A673 (cell line): ENCODE measurements at regions of chr17 and their contacts with region 1.

Region 1: GRCh38 chr17:48678141-48678971 is 44.0 kb downstream of the PRAC1 start:
- DNase-seq: peak; percentile 83
- H3K4me3 ChIP-seq: peak overlapping the region; percentile 39
- H3K27ac ChIP-seq: no peak overlapping the region
- H3K4me1 ChIP-seq: peaks cover 17% of the 10 kb centered on the region
- H3K27me3 ChIP-seq: no peaks in the 10 kb centered on the region
- CTCF ChIP-seq: peak; percentile 99

Region 2: GRCh38 chr17:48756830-48757251 is 78.5 kb after region 1 on chr17:
- CTCF ChIA-PET with region 1: no interaction called
- POLR2A ChIA-PET with region 1: no interaction called
- intact Hi-C with region 1: loop called (anchors 10 kb)
- DNase-seq: no peak
- H3K4me3 ChIP-seq: no peak overlapping the region
- H3K27ac ChIP-seq: peak overlapping the region; percentile 12
- H3K4me1 ChIP-seq: peaks cover 9% of the 10 kb centered on the region
- H3K27me3 ChIP-seq: no peaks in the 10 kb centered on the region
- CTCF ChIP-seq: no peak

Region 3: GRCh38 chr17:48804925-48805411 is 126.6 kb after region 1 on chr17:
- CTCF ChIA-PET with region 1: interaction called, 11 read pairs
- POLR2A ChIA-PET with region 1: no interaction called
- intact Hi-C with region 1: loop called (anchors 5 kb)
- DNase-seq: peak; percentile 87
- H3K4me3 ChIP-seq: peak overlapping the region; percentile 24
- H3K27ac ChIP-seq: peak overlapping the region; percentile 89
- H3K4me1 ChIP-seq: peaks cover 50% of the 10 kb centered on the region
- H3K27me3 ChIP-seq: no peaks in the 10 kb centered on the region
- CTCF ChIP-seq: peak; percentile 96

Region 4: DNA sequence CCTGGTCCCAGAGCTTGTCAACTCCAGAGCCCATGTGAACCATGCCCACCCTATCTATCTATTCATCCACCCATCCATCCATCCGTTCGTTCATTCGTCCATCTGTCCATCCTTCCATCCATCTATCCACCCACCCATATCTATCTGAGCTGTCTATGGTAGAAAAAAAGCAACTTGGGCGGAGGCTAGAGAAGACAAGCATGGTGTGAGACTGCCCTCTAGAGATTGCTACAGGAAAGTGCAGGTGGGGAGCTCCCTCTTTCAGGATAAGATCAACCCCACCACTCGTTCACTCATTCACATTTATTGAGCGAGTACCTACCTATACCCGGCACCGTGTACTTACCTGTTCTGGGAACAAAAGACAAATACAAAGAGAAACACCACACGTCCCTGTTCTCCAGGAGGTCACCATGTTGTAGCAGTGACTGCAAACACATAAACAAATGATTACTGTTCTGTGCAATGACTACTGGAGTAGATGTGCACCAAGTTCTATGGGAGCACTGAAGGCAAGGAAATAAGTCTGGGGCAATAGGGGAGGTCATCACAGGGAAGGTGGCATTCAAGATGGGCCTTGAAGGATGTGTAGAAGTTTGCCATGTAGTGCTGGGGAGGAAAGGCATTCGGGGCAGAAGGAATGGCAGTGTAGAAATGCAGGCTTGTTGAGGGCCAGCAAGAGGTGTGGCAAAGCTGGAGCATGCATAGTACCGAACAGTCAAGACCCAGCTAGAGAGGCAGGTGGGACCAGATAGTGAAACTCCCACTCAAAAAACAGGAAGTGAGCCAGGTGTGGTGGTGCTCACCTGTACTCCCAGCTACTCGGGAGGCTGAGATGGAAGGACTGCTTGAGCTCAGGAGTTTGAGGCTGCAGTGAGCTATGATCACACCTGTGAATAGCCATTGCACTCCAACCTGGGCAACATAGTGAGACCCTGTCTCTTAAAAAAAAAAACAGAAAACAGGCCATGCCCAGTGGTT is 200.9 kb after region 1 on chr17:
- CTCF ChIA-PET with region 1: interaction called, 67 read pairs
- POLR2A ChIA-PET with region 1: no interaction called
- intact Hi-C with region 1: loop called (anchors 1 kb)
- DNase-seq: peak; percentile 82
- H3K4me3 ChIP-seq: no peak overlapping the region
- H3K27ac ChIP-seq: no peak overlapping the region
- H3K4me1 ChIP-seq: no peaks in the 10 kb centered on the region
- H3K27me3 ChIP-seq: no peaks in the 10 kb centered on the region
- CTCF ChIP-seq: peak; percentile 95

Region 5: DNA sequence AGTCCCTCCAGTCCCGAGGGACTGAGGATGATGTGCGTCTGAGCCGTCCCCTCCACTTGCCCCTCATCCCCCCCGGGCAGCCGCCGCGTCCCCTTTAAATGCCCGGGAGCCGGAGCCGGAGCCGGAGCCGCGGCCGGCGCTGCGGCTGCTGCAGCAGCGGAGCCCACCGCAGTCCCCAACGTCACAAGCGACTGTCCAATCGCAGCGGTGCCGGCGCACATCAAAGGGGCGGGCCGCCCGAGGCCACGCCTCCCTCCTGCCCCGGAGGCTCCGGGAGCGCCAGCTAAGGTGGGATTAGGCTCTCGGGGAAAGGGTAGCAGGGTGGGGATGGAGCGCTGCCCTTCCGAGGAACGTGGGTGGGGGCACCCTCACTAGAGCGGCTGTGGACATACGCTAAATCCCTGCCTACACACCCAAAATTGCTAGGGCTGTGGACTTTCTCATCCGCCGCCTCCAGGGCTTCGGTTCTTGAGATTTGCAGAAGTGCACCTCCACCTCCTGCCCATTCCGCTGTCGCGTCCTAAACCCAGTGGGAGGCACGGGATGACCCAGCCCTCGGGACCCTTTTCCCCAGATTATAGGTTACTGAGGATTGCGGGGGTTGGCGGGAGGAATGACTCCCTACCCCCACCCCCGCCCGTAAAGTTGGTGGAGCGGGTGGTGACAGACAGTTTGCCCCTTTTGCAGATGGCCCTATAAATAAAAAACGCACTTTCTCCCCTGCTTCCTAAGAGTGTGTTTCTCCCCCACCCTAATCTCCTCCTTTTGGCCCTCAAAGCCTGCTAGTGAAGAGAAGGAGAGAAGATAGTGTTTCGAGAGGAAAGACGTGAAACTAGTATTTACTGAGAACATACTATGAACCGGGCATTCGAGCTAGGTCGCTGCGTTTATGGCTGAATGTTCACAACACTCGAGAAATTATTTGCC is 552.5 kb after region 1 on chr17 and contains the start of gene PHOSPHO1:
- CTCF ChIA-PET with region 1: no interaction called
- POLR2A ChIA-PET with region 1: no interaction called
- intact Hi-C with region 1: loop called (anchors 10 kb)
- DNase-seq: peak; percentile 94
- H3K4me3 ChIP-seq: peak within 1 kb of the TSS; percentile 76
- H3K27ac ChIP-seq: peak within 1 kb of the TSS; percentile 86
- H3K4me1 ChIP-seq: peaks cover 22% of the 10 kb centered on the region
- H3K27me3 ChIP-seq: no peaks in the 10 kb centered on the region
- CTCF ChIP-seq: no peak
- total RNA-seq, gene PHOSPHO1: 88.6 and 98.3 TPM in 2 replicates